ENCODE measurements at regions of chr15 and their contacts with region 1.

Region 1: GRCh38 chr15:40782580-40783227 is 12.9 kb downstream of the C15orf62 start:
- DNase-seq: peak; percentile 86
- ATAC-seq: peak; percentile 99
- H3K4me3 Mint-ChIP-seq: no peak overlapping the region
- H3K27ac Mint-ChIP-seq: peak overlapping the region; percentile 30
- H3K4me1 Mint-ChIP-seq: peaks cover 18% of the 10 kb centered on the region
- H3K27me3 Mint-ChIP-seq: no peaks in the 10 kb centered on the region

Region 2: GRCh38 chr15:40593588-40594428 is 188.9 kb before region 1 on chr15 and contains the start of gene KNL1:
- CTCF ChIA-PET with region 1: interaction called, 13 read pairs
- DNase-seq: peak; percentile 94
- ATAC-seq: peak; percentile 89
- H3K4me3 Mint-ChIP-seq: peak within 1 kb of the TSS; percentile 93
- H3K27ac Mint-ChIP-seq: peak within 1 kb of the TSS; percentile 99
- H3K4me1 Mint-ChIP-seq: peaks cover 45% of the 10 kb centered on the region
- H3K27me3 Mint-ChIP-seq: peaks cover 2% of the 10 kb centered on the region
- total RNA-seq, gene KNL1: 52.1 to 75.0 TPM

Region 3: DNA sequence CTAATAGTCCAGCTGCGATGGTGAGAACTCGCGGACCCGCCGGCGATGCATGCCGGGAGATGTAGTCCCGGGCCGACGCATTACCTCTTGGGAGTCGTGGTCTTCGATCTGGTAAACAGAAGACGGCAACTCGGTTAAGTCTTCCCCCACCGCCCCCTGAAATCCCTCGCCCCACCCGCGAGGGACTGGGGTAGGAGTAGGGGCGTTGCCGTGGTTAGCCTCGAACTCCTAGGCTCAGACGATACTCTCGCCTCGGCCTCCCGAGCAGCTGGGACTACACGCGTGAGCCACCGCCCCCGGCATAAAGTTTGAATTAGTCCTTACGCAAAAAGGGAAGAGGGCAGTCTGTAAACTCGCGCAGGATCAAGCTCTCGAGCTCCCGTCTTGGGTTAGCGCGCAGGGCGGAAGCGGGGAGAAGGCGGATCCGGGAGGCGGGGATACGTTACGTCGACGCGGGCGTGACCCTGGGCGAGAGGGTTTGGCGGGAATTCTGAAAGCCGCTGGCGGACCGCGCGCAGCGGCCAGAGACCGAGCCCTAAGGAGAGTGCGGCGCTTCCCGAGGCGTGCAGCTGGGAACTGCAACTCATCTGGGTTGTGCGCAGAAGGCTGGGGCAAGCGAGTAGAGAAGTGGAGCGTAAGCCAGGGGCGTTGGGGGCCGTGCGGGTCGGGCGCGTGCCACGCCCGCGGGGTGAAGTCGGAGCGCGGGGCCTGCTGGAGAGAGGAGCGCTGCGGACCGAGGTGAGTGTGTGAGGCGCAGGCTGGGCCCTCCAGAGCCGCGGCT is 87.8 kb before region 1 on chr15 and contains the start of gene RAD51:
- CTCF ChIA-PET with region 1: interaction called, 11 read pairs
- DNase-seq: peak; percentile 95
- ATAC-seq: peak; percentile 94
- H3K4me3 Mint-ChIP-seq: peak within 1 kb of the TSS; percentile 98
- H3K27ac Mint-ChIP-seq: peak within 1 kb of the TSS; percentile 100
- H3K4me1 Mint-ChIP-seq: peaks cover 41% of the 10 kb centered on the region
- H3K27me3 Mint-ChIP-seq: no peaks in the 10 kb centered on the region
- total RNA-seq, gene RAD51: 73.0 to 83.3 TPM

Region 4: GRCh38 chr15:40743921-40744814 is 38.5 kb before region 1 on chr15:
- CTCF ChIA-PET with region 1: interaction called, 23 read pairs
- DNase-seq: peak; percentile 92
- ATAC-seq: peak; percentile 98
- H3K4me3 Mint-ChIP-seq: peak overlapping the region; percentile 39
- H3K27ac Mint-ChIP-seq: peak overlapping the region; percentile 97
- H3K4me1 Mint-ChIP-seq: peaks cover 52% of the 10 kb centered on the region
- H3K27me3 Mint-ChIP-seq: no peaks in the 10 kb centered on the region

Region 5: DNA sequence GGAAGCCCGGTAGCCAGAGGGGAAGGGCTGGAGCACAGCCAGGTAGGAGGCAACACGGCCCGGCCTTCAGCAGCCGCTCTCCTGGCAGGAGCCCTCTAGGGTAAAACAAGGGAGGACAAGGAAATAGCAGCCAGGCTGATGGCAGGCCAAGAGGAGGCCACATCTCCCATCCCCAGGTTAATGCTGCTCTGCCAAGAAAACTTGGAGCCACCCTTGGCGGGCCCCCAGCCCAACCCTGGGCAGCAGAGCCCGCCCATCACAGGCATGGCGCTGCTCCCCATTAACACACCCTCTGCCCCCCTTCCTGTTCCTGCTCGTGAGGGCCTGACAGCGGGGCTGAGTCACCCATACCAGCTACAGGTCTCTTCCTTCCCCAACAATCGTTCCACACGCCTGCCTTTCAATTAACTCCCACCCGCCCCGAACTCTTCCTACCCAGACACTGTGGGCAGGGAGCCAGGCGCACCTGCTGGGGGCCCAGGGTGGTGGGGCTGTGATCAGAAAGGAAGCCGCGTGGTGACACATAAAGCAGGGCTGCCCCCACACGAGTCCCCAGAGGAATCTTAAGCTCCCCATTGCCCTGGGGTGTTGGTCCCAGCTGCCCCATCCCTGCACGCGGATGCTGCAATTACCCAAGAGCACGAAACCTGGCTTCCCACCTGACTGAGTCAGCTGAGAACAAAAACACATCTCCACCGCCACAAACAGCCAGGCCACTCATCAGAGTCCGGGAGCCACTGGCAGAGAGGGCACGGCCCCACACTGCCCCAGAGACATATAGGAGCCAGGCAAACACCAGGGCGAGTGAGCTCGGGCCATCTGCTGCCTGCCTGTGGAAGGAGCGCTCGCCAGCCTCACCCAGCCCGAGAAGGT is 13.2 kb before region 1 on chr15 and contains the start of gene C15orf62:
- CTCF ChIA-PET with region 1: interaction called, 26 read pairs
- DNase-seq: peak; percentile 64
- ATAC-seq: peak; percentile 43
- H3K4me3 Mint-ChIP-seq: no peak within 1 kb of the TSS
- H3K27ac Mint-ChIP-seq: peak within 1 kb of the TSS; percentile 85
- H3K4me1 Mint-ChIP-seq: peaks cover 41% of the 10 kb centered on the region
- H3K27me3 Mint-ChIP-seq: no peaks in the 10 kb centered on the region
- total RNA-seq, gene C15orf62: 0.45 to 0.82 TPM

Measured in activated CD8-positive, alpha-beta memory T cell treated with anti-CD3 and anti-CD28 coated beads, Interleukin-2, amount 10 ng/mL, durations not matched to agents 7 days and 5 days (primary cell).